ENCODE measurements at regions of chr5 and their contacts with region 1.

Region 1: DNA sequence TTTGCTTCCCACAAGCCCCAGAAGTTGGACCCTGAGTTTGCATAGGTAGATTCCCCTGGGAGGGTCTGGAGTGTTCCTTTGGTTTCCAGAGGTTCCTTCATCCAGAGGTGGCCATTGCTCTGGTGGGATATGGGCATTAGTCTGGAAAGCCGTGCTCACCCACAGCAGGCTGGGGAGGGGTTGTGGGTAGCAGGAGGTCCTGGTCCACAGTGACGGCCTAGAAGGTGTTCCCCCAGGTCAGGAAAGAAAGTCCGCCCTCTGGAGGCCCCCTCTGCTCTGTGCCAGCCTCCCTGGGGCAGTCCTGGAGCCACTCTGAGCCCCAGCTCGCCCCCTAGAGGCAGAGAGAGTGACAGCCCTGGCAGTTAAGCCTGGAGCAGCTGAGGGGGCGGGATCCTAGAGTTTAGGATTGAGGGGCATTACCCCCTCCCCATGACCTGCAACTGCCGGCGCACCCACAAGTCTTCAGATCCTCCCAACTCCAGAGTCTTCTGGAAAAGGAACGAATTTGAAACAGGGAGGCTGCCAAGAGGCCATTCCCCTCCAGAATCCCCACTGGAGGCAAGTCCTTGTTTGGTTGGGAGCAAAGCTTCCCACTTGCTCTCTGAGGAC is 36.8 kb downstream of the NDST1 start:
- DNase-seq: peak; percentile 68 to 70
- H3K4me3 ChIP-seq: no peak overlapping the region
- H3K27ac ChIP-seq: peak overlapping the region in 1 of 3 donors; percentile 2
- H3K4me1 ChIP-seq: peaks cover 19 to 28% of the 10 kb centered on the region in 2 donors
- H3K27me3 ChIP-seq: no peaks in the 10 kb centered on the region
- CTCF ChIP-seq: peak; percentile 46 to 83 (median 70)
- POLR2A ChIP-seq: no peak

Region 2: DNA sequence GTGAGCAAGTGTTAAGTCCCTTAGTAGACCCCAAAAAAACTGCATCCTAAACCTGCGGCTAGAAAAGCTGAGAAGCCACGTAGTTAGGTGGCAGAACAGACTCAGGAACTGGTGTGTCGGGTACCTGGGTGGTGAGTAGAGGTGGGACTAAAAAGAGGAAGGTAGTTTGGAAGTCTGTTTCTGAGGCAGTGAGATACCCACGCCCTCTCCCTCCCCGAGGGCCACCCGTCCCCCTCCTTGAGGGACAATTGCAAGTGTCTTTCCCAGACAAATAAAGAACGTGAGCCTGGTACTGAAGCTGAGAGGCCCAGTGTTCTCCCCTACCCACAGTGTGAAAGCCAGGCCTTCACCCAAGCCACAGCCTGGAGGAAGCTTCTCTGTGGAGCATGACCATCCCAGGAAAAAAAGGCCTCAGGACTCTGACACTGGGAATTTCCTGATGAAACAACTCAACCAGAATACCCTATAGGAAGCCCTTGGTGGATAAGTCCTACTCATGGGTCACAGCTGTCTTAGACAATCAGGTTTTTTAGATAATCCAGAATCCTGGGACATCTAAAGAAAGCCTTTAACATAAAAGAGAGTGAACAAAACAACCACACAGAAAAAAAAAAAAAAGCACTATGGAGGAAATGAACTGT is 125.0 kb before region 1 on chr5:
- intact Hi-C with region 1: no loop called
- DNase-seq: no peak
- H3K4me3 ChIP-seq: no peak overlapping the region
- H3K27ac ChIP-seq: no peak overlapping the region
- H3K4me1 ChIP-seq: no peaks in the 10 kb centered on the region
- H3K27me3 ChIP-seq: no peaks in the 10 kb centered on the region
- CTCF ChIP-seq: no peak
- POLR2A ChIP-seq: no peak

Region 3: GRCh38 chr5:150458819-150459557 is 85.7 kb before region 1 on chr5:
- intact Hi-C with region 1: loop called (anchors 2 kb)
- DNase-seq: peak; percentile 78 to 81
- H3K4me3 ChIP-seq: no peak overlapping the region
- H3K27ac ChIP-seq: peak overlapping the region in 1 of 3 donors; percentile 5
- H3K4me1 ChIP-seq: peaks cover 0 to 15% of the 10 kb centered on the region in 2 donors
- H3K27me3 ChIP-seq: no peaks in the 10 kb centered on the region
- CTCF ChIP-seq: peak; percentile 55 to 88 (median 84)
- POLR2A ChIP-seq: no peak